ENCODE measurements at regions of chr2 and their contacts with region 1.

Region 1: GRCh38 chr2:151638191-151638933 is 95.9 kb downstream of the NEB start:
- DNase-seq: no peak
- H3K4me3 ChIP-seq: no peak overlapping the region
- CTCF ChIP-seq: no peak

Region 2: DNA sequence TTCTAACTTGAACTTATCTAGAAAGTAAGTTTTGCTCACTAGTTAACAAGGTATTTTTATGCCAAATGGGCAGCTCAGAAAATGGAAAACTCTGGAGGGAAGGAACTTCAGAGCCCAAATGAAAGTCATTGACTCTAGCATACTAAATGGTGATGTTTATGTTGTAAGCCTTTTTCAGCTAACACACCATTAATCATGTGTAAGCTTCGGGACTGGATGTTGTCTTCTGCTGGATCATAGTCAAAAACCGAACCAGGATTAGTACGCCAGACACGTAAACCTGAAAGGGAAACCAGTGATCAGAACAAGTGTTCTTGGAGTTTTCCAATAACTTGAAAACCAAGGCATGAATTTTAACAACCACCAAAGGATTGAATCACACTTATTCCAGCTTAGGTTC is 146.9 kb before region 1 on chr2:
- in situ Hi-C with region 1: loop called (anchors 10 kb)
- DNase-seq: no peak
- H3K4me3 ChIP-seq: no peak overlapping the region
- CTCF ChIP-seq: no peak

Region 3: GRCh38 chr2:151556121-151556520 is 82.2 kb before region 1 on chr2:
- in situ Hi-C with region 1: loop called (anchors 10 kb)
- DNase-seq: no peak
- H3K4me3 ChIP-seq: no peak overlapping the region
- CTCF ChIP-seq: no peak

Region 4: GRCh38 chr2:151695778-151696177 is 57.4 kb after region 1 on chr2:
- in situ Hi-C with region 1: no loop called
- DNase-seq: no peak
- H3K4me3 ChIP-seq: no peak overlapping the region
- CTCF ChIP-seq: no peak